ENCODE measurements at regions of chr2 and their contacts with region 1.

Region 1: DNA sequence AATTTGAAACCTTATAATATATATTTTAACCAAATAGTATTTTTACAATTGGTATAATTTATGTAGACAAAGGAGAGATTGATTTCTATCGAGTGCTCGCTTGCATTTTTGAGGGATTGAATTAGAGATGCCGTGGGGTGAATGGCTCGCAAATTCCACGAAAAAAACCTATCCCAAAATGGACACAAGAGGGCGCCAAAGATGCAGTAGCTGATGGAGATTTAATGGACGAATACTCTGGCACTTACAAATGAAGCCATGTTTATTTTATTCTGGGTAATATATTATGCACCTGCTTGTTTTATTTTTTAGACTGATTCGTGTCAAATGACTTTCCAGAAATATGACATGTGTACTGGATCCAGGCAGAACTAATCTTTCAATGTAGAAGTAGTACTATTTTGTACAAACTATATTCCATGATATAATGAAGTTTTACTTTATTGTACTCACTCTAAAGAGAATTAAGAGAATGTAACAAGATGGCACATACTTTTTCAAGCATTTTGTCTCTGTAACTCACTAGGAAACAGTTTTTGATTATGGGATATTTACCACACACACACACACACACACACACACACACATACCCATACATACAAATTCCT is 505.4 kb downstream of the PLCL1 start:
- DNase-seq: peak in 3 of 5 donors; percentile 47 to 75 (median 64)
- H3K4me3 ChIP-seq: no peak overlapping the region
- H3K27ac ChIP-seq: no peak overlapping the region
- H3K4me1 ChIP-seq: no peaks in the 10 kb centered on the region
- H3K27me3 ChIP-seq: no peaks in the 10 kb centered on the region
- CTCF ChIP-seq: peak; percentile 71

Region 2: GRCh38 chr2:197986977-197987376 is 322.8 kb before region 1 on chr2:
- intact Hi-C with region 1: no loop called
- DNase-seq: no peak
- H3K4me3 ChIP-seq: no peak overlapping the region
- H3K27ac ChIP-seq: no peak overlapping the region
- H3K4me1 ChIP-seq: peaks cover 0 to 8% (median 3%) of the 10 kb centered on the region in 3 donors
- H3K27me3 ChIP-seq: no peaks in the 10 kb centered on the region
- CTCF ChIP-seq: no peak

Region 3: GRCh38 chr2:198188982-198189381 is 120.8 kb before region 1 on chr2:
- intact Hi-C with region 1: no loop called
- DNase-seq: no peak
- H3K4me3 ChIP-seq: no peak overlapping the region
- H3K27ac ChIP-seq: no peak overlapping the region
- H3K4me1 ChIP-seq: no peaks in the 10 kb centered on the region
- H3K27me3 ChIP-seq: no peaks in the 10 kb centered on the region
- CTCF ChIP-seq: no peak

Region 4: DNA sequence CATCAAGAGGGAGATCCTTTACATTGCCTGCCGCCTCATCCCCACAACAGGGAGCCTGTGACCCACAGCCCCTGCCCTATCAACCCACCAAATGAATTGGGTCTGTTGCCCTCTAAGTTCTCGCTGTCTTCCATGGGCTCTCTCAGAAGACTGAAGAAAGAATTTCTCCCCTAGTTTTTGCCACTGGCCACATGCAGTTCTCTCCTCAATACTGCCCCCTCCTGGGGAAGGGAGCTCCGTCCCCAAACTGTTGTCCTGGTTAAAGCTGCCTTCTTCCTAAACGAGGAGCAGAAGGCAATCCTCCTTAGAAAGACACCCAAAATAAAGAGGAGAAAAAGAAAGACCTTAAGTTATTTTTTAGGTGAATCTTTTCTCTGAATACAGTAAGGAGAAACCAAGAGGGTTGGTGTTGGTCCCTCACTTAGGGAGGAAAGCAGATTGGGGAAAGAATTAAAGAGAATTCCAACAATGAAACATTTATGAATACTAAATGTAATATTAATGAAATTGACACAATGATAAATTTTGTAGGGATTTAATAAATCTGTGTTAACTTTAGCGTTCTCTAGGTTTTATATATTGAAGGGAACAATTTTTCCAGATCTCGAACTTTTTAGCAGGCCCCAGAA is 1179.1 kb after region 1 on chr2:
- intact Hi-C with region 1: loop called (anchors 10 kb)
- DNase-seq: peak in 4 of 5 donors; percentile 59 to 79 (median 67)
- H3K4me3 ChIP-seq: no peak overlapping the region
- H3K27ac ChIP-seq: no peak overlapping the region
- H3K4me1 ChIP-seq: no peaks in the 10 kb centered on the region
- H3K27me3 ChIP-seq: no peaks in the 10 kb centered on the region
- CTCF ChIP-seq: peak; percentile 66

Region 5: DNA sequence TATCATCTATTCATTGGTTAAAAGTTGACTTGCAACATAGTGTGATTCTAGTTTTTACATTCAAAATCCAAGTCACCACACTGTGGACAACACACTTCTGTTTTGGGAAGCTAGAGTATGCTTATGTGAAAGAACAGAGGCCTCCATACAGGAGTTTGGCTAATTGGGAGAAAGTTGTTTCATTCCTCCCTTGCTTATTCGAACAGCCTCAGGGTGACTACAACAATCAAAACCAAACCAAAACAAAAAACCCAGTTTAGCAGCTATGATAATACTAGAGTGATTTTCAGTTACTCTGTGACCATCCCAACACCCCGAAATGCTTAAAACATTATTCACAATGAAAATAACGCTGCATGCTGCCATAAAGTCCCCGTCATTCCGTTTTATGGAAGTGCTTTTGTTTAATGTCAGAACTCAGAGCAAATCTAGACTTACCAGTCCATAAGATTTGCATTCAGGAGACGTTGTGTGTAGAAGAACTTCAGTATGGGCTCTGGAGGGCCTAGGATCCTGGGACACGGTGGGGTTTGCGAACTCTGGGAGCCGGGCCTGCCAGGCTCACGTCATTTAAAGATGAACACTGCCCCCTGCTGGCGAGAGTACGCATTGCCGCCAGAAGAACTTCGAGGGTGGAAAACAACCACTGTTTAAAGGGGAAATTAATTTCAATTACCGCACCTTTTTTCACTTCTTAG is 1429.8 kb after region 1 on chr2:
- intact Hi-C with region 1: loop called (anchors 10 kb)
- DNase-seq: peak; percentile 71 to 80 (median 73)
- H3K4me3 ChIP-seq: peak overlapping the region in 1 of 3 donors; percentile 47
- H3K27ac ChIP-seq: no peak overlapping the region
- H3K4me1 ChIP-seq: peaks cover 0 to 6% (median 0%) of the 10 kb centered on the region in 3 donors
- H3K27me3 ChIP-seq: no peaks in the 10 kb centered on the region
- CTCF ChIP-seq: peak; percentile 84